ENCODE measurements at regions of chr9 and their contacts with region 1.

Region 1: DNA sequence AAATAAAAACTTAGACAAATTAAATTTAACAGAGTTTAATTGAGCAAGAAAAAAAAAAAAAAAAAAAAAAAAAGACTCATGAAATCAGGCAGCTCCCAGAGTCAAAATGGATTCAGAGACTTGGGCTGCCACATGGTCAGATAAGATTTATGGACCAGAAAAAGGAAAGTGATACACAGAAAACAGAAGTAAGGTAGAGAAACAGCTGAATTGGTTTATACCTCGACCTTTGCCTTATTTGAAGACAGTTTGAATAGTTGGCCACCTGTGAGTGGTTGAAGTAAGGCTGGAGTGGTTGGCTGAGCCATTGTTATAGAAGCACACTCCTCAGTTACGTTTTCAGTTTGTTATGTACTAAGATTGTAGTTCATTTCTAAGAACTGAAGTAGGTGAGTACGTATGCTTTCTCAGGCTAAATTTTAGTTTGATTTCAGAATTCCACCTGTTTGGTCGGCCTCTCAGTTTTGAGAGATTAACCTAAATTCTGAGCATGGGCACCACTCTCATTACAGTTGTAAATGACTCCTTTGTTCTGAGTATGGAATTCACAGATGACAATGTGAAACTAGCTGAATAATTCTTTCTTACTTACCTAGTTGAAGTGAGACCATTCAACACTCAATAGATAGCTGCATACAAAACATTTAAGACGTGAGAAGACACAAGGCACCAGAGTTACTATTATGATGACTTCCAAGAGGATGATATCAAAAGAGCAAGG is 149.0 kb downstream of the AOPEP start:
- DNase-seq: no peak
- ATAC-seq: no peak
- H3K4me3 ChIP-seq: no peak overlapping the region
- H3K27ac ChIP-seq: no peak overlapping the region
- H3K4me1 ChIP-seq: peaks cover 0 to 5% of the 10 kb centered on the region in 2 experiments; a peak in 4 of 5 replicates
- H3K27me3 ChIP-seq: no peaks in the 10 kb centered on the region
- CTCF ChIP-seq: no peak
- EP300 ChIP-seq: no peak
- POLR2A ChIP-seq: no peak
- RAD21 ChIP-seq: no peak

Region 2: GRCh38 chr9:94802793-94803192 is 72.7 kb before region 1 on chr9:
- CTCF ChIA-PET with region 1: no interaction called
- POLR2A ChIA-PET with region 1: no interaction called
- in situ Hi-C with region 1: no loop called
- intact Hi-C with region 1: loop called (anchors 5 kb)
- DNase-seq: no peak
- ATAC-seq: no peak
- H3K4me3 ChIP-seq: no peak overlapping the region
- H3K27ac ChIP-seq: no peak overlapping the region
- H3K4me1 ChIP-seq: no peaks in the 10 kb centered on the region; a peak in 2 of 5 replicates
- H3K27me3 ChIP-seq: no peaks in the 10 kb centered on the region
- CTCF ChIP-seq: no peak
- EP300 ChIP-seq: no peak
- POLR2A ChIP-seq: no peak
- RAD21 ChIP-seq: no peak

Region 3: DNA sequence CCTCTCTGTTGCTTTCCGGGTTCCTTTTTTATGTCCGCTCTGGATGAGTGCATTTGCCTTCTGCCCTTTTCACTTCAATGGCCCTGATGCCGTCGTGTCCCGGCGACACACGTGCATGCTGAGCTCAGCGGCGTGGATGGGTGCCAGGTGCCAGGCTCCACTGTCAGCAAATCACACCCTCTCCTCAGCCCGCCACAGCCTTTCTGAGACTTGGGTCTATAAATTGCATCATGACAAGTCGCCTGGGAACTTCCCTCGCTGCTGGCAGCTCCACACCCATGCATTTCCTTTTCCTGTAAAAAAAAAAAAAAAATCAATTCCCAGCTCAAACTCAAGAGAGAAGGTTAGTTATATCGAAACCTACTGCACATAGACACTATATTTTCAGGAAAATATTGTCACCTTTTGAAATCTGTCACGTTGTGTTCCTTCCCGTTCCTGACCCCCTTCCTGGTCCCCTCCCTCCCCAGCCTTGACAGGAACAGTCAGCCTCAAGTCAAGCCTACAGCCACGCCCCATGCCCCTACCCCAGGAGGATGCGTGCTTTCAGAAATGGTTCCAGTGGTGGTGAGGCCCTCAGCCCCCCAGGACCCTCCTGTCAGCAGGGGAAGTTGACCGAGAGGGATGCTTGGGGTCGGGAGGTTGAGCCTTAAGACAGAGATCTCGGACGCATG is 751.6 kb after region 1 on chr9:
- CTCF ChIA-PET with region 1: no interaction called
- POLR2A ChIA-PET with region 1: no interaction called
- in situ Hi-C with region 1: no loop called
- intact Hi-C with region 1: no loop called
- DNase-seq: no peak
- ATAC-seq: no peak
- H3K4me3 ChIP-seq: no peak overlapping the region
- H3K27ac ChIP-seq: no peak overlapping the region
- H3K4me1 ChIP-seq: peaks cover 0 to 7% of the 10 kb centered on the region in 2 experiments; a peak in 2 of 5 replicates
- H3K27me3 ChIP-seq: peaks cover 21 to 37% of the 10 kb centered on the region in 2 experiments; a peak in 4 of 5 replicates
- CTCF ChIP-seq: no peak
- EP300 ChIP-seq: no peak
- POLR2A ChIP-seq: no peak
- RAD21 ChIP-seq: no peak

Measured in K562 (cell line).